Heart left ventricle (tissue), 16 donors: ENCODE measurements at regions of chr11 and their contacts with region 1.

Region 1: DNA sequence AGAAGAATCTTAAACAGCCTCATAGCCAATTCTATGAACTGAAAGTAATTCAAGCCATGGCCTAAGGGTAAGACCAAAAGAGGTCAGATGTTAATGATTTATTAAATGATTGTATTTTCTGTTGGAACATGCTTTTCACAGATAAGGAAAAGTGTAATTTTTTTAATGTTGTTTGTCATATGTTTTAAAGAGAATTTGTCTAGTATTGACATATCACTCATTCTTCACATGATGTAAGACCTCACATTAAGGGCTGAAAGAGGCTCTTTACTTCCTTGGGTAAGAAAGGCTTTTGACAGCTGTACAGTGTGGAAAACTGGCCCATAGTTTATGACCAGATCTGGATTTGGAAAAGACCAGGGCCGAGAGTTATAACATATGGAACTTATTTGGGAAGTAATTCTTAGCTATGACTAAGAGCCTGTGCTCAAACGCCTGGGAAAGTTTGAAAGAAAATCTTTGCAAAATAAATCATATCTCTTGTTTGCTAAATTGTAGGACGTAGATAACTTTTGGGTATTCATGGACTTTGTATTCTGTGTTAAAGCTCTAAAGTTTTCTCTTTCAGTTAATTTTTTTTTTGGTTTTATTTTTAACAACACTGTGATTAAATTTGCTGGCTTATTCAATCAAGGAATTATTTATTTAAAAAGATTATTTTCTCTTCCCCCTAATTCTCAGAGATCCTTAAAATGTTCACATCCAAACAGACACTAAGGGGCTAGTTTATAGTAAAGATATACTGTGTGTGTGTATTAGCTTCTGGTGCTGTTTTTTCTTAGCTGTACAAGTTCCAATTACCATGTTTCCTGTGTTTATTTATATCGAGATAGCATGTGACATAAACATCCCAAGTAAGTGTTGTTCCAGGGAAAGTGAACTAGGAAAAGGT is 162.2 kb downstream of the ARHGAP42 start:
- DNase-seq: no peak
- ATAC-seq: peak in 3 of 4 donors; percentile 47 to 86 (median 62)
- H3K4me3 ChIP-seq: peak overlapping the region in 2 of 12 donors; percentile 7 to 8
- H3K27ac ChIP-seq: peak overlapping the region in 9 of 12 donors; percentile 13 to 61 (median 36)
- H3K4me1 ChIP-seq: peaks cover 0 to 28% (median 17%) of the 10 kb centered on the region in 12 donors
- H3K27me3 ChIP-seq: no peaks in the 10 kb centered on the region
- CTCF ChIP-seq: no peak
- POLR2A ChIP-seq: no peak

Region 2: DNA sequence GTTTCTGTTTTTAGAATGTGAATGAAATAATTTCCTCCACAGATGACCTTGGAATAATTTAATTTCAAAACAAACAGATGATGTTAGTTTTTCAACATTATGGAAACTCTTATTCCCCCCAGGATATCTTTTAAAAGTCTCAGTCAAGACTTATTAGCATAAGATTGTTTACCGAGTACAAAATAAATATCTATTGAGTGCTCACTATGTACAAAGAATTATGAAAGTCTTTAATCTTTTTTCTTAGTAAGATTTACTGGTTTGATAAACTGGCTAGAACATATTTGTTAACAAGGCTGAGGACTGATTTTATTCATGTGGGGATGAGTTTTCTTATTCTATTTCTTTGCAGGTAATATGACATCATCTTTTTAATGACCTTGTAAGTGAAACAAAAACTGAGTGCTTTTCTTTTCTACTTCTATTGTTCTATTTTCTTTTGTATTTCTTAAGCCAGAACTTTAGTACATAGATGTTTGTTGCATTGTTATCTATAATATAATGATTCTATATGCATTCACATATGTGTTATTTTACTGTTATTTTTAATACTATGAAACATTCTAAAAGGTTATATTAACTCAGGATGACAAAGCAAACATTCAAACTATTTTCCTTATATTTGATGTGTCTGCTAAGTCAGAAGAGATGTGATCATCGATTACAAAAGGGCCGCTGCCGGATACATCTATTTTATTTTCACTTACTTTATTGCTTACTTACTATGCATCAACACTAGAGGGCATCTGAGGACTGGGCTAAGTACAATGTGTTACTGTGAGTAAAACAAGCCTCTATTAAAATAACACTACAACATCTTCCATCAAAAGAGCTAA is 273.2 kb before region 1 on chr11:
- intact Hi-C with region 1: loop called in 5 of 10 experiments (anchors 2 kb)
- DNase-seq: peak in 1 of 5 donors; percentile 12
- ATAC-seq: peak in 3 of 4 donors; percentile 77 to 84 (median 80)
- H3K4me3 ChIP-seq: peak overlapping the region in 3 of 12 donors; percentile 17 to 27 (median 26)
- H3K27ac ChIP-seq: no peak overlapping the region
- H3K4me1 ChIP-seq: peaks cover 0 to 4% (median 0%) of the 10 kb centered on the region in 12 donors
- H3K27me3 ChIP-seq: no peaks in the 10 kb centered on the region
- CTCF ChIP-seq: peak; percentile 67 to 90 (median 73)
- POLR2A ChIP-seq: no peak

Region 3: DNA sequence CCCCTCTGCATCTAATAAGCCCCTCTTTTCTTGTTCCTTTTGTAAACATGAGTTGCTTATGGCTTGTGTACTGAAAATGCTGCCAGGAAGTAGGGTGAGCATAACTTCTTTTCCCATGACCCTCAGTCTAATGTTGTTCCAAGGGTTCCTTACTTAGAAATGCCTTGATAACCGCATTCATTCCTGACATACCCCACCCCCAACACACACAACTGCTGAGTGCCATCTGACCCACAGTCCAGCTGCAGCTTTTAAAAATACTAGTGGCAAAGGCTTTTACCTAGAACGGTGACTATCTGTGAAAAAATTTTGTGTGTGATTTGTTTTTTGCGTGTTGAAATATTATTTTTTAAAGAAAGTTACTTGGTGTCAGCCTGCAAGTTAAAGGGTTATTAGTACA is 109.6 kb before region 1 on chr11:
- intact Hi-C with region 1: loop called in 1 of 10 experiments (anchors 10 kb)
- DNase-seq: peak in 3 of 5 donors; percentile 32 to 48 (median 38)
- ATAC-seq: peak; percentile 80 to 92 (median 88)
- H3K4me3 ChIP-seq: peak overlapping the region in 3 of 12 donors; percentile 1 to 9 (median 3)
- H3K27ac ChIP-seq: peak overlapping the region in 10 of 12 donors; percentile 6 to 73 (median 48)
- H3K4me1 ChIP-seq: peaks cover 0 to 64% (median 35%) of the 10 kb centered on the region in 12 donors
- H3K27me3 ChIP-seq: no peaks in the 10 kb centered on the region
- CTCF ChIP-seq: no peak
- POLR2A ChIP-seq: no peak